ENCODE measurements at regions of chr11 and their contacts with region 1.

Region 1: DNA sequence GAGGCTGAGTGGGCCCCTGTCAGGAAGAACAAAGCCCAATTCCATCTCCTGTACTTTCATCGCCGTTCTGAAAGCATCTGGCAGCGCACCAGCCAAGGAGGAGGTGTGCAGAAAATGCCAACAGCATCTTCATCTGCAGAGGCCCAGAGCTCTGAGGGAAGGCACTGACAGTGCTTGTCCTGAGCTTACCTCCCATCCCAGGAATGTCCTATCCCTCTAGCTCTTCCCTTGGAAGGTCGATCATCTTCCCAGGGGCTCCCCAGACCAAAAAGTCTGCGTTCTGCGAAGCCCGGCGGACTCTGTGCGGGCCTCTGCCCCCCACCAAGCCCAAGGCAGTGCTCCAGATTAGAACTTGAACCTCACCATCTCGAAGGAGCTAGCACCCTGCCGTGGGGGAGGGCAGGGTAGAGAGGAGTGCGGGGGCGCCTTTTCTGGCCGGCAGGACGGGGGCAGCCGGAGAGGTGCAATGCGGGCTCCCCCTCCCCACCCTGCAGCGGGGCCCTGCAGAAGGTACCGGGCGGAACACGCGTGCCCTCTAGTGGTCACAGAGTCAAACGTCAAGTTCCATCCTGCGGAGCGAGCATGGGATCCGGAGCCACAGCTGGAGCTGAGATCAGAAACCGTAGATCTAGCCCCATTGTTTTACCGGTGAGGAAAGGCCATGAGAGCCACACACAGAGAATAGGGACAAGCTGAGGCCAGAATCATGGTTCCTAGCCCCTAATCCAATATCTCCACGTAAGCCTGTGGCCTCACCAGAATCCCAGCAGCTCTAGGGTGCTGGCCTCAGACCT is 5.0 kb downstream of the SCN2B start:
- DNase-seq: peak; percentile 87

Region 2: DNA sequence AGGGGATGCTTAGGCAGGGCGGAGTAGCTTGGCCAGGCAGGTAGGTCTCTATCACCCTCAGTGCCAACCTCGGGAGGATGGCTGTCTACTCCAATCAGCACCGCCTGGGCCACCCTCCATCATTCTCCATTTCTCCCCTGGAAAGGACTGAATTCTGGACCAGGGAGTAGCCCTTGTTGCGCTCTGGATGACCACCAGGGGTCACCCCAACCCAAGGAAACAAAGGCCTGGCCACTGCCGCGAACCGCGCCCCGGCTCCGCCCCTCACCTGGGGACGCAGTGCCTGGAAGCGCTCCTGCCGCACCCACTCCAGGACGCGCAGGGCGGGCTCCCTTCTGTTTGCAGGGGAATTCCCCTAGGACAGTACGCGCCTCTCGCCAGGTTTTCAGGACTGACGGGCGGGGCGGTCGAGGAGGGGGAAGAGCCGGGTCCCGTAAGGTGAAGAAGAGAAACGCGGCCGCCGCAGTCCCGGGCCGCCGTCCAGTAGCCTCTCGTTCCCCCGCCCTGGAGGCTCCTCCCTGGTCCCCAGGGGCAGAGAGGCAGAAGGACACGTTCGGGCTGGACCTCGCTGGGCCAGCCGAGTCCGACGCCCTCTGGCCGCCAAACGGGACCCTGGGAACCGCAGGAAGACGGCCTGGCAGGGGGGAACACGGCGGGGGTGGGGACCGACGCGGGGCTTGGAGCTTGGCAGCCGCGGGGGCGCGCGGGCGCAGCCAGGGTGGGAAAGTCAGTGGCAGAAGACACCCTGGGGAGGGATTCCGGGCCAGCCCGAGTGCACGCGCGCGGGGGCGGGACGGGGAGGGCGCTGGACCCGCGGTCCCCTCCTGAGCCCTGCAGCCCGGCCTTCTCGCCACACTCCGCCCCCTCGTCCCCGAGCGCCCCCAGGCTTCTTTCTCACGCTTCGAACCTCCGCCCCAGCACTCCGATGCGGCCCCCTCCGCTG is 25.9 kb before region 1 on chr11:
- CTCF ChIA-PET with region 1: interaction called, 28 read pairs
- POLR2A ChIA-PET with region 1: no interaction called
- DNase-seq: peak; percentile 95

Region 3: GRCh38 chr11:118156531-118157185 is 14.8 kb before region 1 on chr11:
- CTCF ChIA-PET with region 1: interaction called, 19 read pairs
- POLR2A ChIA-PET with region 1: interaction called, 4 read pairs
- DNase-seq: peak; percentile 22

Measured in HEK293T (cell line).